Heart left ventricle (tissue), 16 donors: ENCODE measurements at regions of chr15 and their contacts with region 1.

Region 1: DNA sequence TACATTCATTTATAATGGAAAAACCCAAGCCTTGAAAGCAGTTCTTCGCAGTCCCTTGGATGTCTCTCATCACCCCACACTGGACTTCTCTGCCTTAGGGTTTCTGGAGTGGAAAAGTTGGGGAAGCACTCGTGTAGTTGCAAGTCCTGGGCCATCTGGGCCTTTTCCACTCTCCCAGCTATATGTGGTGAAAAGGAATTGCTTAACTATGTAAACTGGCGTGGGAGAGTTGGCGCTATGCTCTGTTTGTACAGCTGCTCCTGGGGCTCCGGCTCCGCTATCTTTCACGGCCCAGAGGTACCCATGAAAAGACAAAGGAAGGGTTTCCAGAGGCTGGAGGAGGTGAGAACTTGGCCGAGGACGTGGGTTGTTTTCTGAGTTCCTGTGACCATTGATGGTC is 81.1 kb upstream of the MYZAP start:
- DNase-seq: peak; percentile 66 to 80 (median 71)
- ATAC-seq: peak; percentile 45 to 89 (median 76)
- H3K4me3 ChIP-seq: no peak overlapping the region
- H3K27ac ChIP-seq: peak overlapping the region in 6 of 12 donors; percentile 27 to 61 (median 54)
- H3K4me1 ChIP-seq: peaks cover 0 to 45% (median 20%) of the 10 kb centered on the region in 12 donors
- H3K27me3 ChIP-seq: no peaks in the 10 kb centered on the region
- CTCF ChIP-seq: no peak
- POLR2A ChIP-seq: no peak

Region 2: GRCh38 chr15:57375827-57376695 is 134.6 kb before region 1 on chr15 and contains the start of gene CGNL1:
- intact Hi-C with region 1: loop called in 1 of 10 experiments (anchors 10 kb)
- DNase-seq: peak; percentile 40 to 74 (median 53)
- ATAC-seq: peak in 3 of 4 donors; percentile 71 to 92 (median 92)
- H3K4me3 ChIP-seq: peak within 1 kb of the TSS; percentile 51 to 89 (median 66)
- H3K27ac ChIP-seq: peak within 1 kb of the TSS in 9 of 12 donors; percentile 12 to 71 (median 46)
- H3K4me1 ChIP-seq: peaks cover 0 to 19% (median 10%) of the 10 kb centered on the region in 12 donors
- H3K27me3 ChIP-seq: peaks cover 0 to 36% (median 6%) of the 10 kb centered on the region in 9 donors
- CTCF ChIP-seq: no peak
- POLR2A ChIP-seq: no peak
- total RNA-seq, gene CGNL1: 16.9 to 40.0 (median 23.7) TPM

Region 3: DNA sequence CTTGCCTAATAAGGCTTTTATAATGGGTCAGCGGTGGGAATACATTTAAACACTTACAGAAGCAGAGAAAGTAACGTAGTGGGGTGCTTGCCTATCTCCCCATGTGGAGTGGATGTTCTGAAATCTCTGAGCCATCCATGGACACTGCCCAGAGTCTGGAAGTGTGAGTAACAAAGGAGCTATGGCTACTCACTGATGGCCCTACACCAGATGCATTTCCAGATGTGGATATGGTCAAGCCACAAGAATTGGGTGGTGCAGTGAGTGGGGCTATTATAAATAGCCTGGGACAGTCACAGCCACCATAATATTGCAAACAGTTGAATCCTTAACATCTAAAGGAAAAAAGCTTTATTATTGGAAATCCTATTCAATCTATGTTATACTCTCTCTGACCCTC is 37.8 kb before region 1 on chr15:
- intact Hi-C with region 1: no loop called
- DNase-seq: no peak
- ATAC-seq: no peak
- H3K4me3 ChIP-seq: no peak overlapping the region
- H3K27ac ChIP-seq: no peak overlapping the region
- H3K4me1 ChIP-seq: peaks cover 0 to 28% (median 0%) of the 10 kb centered on the region in 12 donors
- H3K27me3 ChIP-seq: no peaks in the 10 kb centered on the region
- CTCF ChIP-seq: no peak
- POLR2A ChIP-seq: no peak